Gastrocnemius medialis (tissue), 4 donors: ENCODE measurements at regions of chr15 and their contacts with region 1.

Region 1: DNA sequence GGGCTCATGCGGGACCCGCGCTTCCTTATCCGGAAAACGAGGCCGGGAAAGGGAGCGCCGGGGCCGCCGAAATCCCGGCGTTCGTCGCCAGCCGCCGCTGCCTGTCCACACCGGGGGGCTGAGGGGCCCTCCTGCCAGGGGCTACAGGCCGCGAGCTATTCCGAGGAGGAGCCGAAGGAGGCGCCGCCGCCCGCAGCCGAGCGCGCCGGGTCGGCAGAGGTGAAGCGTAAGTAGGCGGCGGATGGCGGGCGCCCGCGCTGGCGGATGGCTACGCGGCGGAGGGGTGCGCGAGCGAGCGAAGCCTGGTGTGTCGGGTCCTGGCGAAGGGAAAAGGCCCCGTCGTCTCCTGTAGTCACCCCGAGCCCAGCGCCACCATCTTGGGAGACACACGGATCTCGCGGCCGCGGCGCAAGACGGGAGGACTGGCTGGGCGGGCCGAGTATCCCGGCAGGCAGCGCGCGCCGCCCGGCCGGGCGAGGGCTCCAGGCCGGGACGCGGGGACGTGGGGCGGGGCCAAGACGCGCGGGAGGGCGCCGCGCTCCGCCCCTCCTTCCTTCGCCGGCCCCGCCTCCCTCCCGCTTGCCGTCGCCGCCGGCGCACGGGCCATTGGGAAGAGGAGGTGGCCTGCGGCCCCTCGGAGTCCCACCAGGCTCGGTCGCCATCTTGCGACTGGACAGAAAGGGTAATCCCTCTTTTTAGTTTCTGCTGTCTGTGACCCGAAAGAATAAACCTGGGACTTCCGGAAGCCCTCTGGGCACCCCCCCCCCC is at the start of gene UBE3A:
- DNase-seq: peak; percentile 83 to 90
- ATAC-seq: peak; percentile 85 to 91
- H3K4me3 ChIP-seq: peak within 1 kb of the TSS; percentile 85 to 100 (median 96)
- H3K27ac ChIP-seq: peak within 1 kb of the TSS; percentile 91 to 100 (median 100)
- H3K4me1 ChIP-seq: peaks cover 38 to 39% of the 10 kb centered on the region in 2 donors
- H3K27me3 ChIP-seq: no peaks in the 10 kb centered on the region
- CTCF ChIP-seq: peak; percentile 19 to 57 (median 45)
- POLR2A ChIP-seq: peak; percentile 81 to 90
- total RNA-seq, gene UBE3A: 107 to 154 (median 130) TPM

Region 2: GRCh38 chr15:24956111-24956838 is 482.5 kb before region 1 on chr15:
- in situ Hi-C with region 1: no loop called
- intact Hi-C with region 1: loop called (anchors 5 kb)
- DNase-seq: peak; percentile 69 to 89
- ATAC-seq: peak; percentile 75
- H3K4me3 ChIP-seq: peak overlapping the region; percentile 72 to 86 (median 82)
- H3K27ac ChIP-seq: peak overlapping the region; percentile 87 to 96 (median 94)
- H3K4me1 ChIP-seq: peaks cover 0 to 9% of the 10 kb centered on the region in 2 donors
- H3K27me3 ChIP-seq: no peaks in the 10 kb centered on the region
- CTCF ChIP-seq: no peak
- POLR2A ChIP-seq: peak in 1 of 2 donors; percentile 25

Region 3: DNA sequence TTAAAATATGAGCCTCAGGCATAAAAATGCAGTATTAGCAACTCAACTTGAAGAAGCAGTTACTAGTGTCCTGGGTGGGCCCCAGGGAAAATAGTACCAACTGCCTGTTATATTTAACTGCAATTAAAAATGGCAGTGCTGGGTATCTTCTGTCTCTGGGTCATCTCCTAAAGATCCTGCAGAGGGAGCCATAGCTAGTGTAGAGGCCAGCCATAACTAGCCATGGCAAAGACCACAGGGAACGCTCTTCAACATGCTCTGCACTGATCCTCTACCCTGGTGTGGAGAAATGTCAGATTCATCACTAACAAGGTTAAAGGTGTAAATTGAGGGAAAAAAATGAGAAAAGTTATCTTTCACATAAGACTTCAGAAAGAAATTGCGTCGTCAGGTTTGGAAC is 302.7 kb before region 1 on chr15:
- in situ Hi-C with region 1: loop called in 1 of 4 experiments (anchors 10 kb)
- intact Hi-C with region 1: loop called (anchors 2 kb)
- DNase-seq: no peak
- ATAC-seq: peak; percentile 64 to 73
- H3K4me3 ChIP-seq: no peak overlapping the region
- H3K27ac ChIP-seq: no peak overlapping the region
- H3K4me1 ChIP-seq: no peaks in the 10 kb centered on the region
- H3K27me3 ChIP-seq: no peaks in the 10 kb centered on the region
- CTCF ChIP-seq: peak in 4 of 5 experiments; percentile 23 to 46 (median 34)
- POLR2A ChIP-seq: no peak

Region 4: GRCh38 chr15:25329696-25330095 is 109.1 kb before region 1 on chr15:
- in situ Hi-C with region 1: no loop called
- intact Hi-C with region 1: loop called (anchors 5 kb)
- DNase-seq: no peak
- ATAC-seq: peak in 1 of 2 donors; percentile 31
- H3K4me3 ChIP-seq: no peak overlapping the region
- H3K27ac ChIP-seq: peak overlapping the region in 1 of 4 donors; percentile 37
- H3K4me1 ChIP-seq: peaks cover 18 to 24% of the 10 kb centered on the region in 2 donors
- H3K27me3 ChIP-seq: no peaks in the 10 kb centered on the region
- CTCF ChIP-seq: no peak
- POLR2A ChIP-seq: no peak

Region 5: GRCh38 chr15:25345943-25346342 is 92.8 kb before region 1 on chr15:
- in situ Hi-C with region 1: loop called in 2 of 4 experiments (anchors 10 kb)
- intact Hi-C with region 1: loop called (anchors 1 kb)
- DNase-seq: peak; percentile 86 to 92
- ATAC-seq: peak; percentile 99 to 100
- H3K4me3 ChIP-seq: peak overlapping the region; percentile 15 to 33 (median 24)
- H3K27ac ChIP-seq: peak overlapping the region; percentile 81 to 90 (median 89)
- H3K4me1 ChIP-seq: peaks cover 23 to 33% of the 10 kb centered on the region in 2 donors
- H3K27me3 ChIP-seq: no peaks in the 10 kb centered on the region
- CTCF ChIP-seq: peak; percentile 30 to 60 (median 54)
- POLR2A ChIP-seq: peak in 1 of 2 donors; percentile 7

Region 6: GRCh38 chr15:25397100-25397499 is 41.7 kb before region 1 on chr15:
- in situ Hi-C with region 1: no loop called
- intact Hi-C with region 1: loop called (anchors 5 kb)
- DNase-seq: peak in 1 of 2 donors; percentile 6
- ATAC-seq: peak; percentile 43 to 83
- H3K4me3 ChIP-seq: no peak overlapping the region
- H3K27ac ChIP-seq: peak overlapping the region; percentile 50 to 79 (median 76)
- H3K4me1 ChIP-seq: peaks cover 23 to 44% of the 10 kb centered on the region in 2 donors
- H3K27me3 ChIP-seq: no peaks in the 10 kb centered on the region
- CTCF ChIP-seq: no peak
- POLR2A ChIP-seq: no peak

Region 7: GRCh38 chr15:25670025-25670554 is 231.3 kb after region 1 on chr15:
- in situ Hi-C with region 1: no loop called
- intact Hi-C with region 1: loop called (anchors 5 kb)
- DNase-seq: peak; percentile 81 to 88
- ATAC-seq: peak; percentile 70 to 77
- H3K4me3 ChIP-seq: peak overlapping the region; percentile 4 to 34 (median 28)
- H3K27ac ChIP-seq: peak overlapping the region; percentile 79 to 91 (median 86)
- H3K4me1 ChIP-seq: peaks cover 48 to 49% of the 10 kb centered on the region in 2 donors
- H3K27me3 ChIP-seq: no peaks in the 10 kb centered on the region
- CTCF ChIP-seq: peak in 1 of 5 experiments; percentile 9
- POLR2A ChIP-seq: peak; percentile 45 to 63